IMR-90 (cell line): ENCODE measurements at regions of chr2 and their contacts with region 1.

Region 1: DNA sequence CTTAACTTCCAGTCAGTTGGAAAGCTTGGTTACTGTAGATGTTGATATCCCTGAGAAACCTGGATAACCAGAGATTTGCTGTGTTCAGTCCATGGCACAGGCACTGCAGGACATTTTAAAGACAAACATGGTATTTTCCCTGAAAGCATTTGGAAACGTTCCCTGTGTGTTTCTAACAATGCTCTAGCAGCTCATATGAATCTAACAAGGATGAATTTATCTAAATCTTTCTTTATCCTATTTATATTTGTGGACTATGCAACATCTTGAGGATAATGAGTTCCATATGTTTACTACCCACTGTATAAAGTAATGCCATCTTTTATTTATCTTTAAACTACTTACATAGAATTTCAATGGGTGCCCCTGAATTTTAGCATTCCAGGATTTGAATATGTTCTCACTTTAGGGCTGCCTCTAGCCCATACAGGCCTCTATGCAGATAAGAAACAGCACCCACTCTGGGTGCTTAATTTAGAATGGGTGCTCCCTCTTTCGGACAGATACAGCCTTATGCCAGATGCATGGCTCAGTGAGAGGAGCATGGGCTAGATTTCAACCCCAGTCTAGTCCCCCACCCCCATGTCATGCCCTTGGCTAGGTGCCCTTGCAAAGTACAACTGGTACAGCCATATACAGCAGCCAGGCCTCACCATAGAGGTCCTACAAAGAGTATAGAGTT is 50.6 kb upstream of the NEMP2 start:
- DNase-seq: no peak
- ATAC-seq: peak; percentile 17; the same call in 1 of the 2 replicates
- H3K4me3 ChIP-seq: no peak overlapping the region
- H3K27ac ChIP-seq: no peak overlapping the region
- H3K4me1 ChIP-seq: peaks cover 2% of the 10 kb centered on the region; the same call in 1 of the 2 replicates
- H3K27me3 ChIP-seq: peaks cover 2% of the 10 kb centered on the region; the same call in 1 of the 2 replicates
- CTCF ChIP-seq: no peak
- POLR2A ChIP-seq: no peak
- RAD21 ChIP-seq: no peak

Region 2: GRCh38 chr2:190627448-190628412 is 42.6 kb after region 1 on chr2:
- CTCF ChIA-PET with region 1: no interaction called
- POLR2A ChIA-PET with region 1: no interaction called
- dilution Hi-C with region 1: no loop called
- in situ Hi-C with region 1: no loop called
- intact Hi-C with region 1: loop called (anchors 5 kb)
- DNase-seq: no peak
- ATAC-seq: peak; percentile 87
- H3K4me3 ChIP-seq: peak overlapping the region; percentile 53
- H3K27ac ChIP-seq: no peak overlapping the region
- H3K4me1 ChIP-seq: no peaks in the 10 kb centered on the region
- H3K27me3 ChIP-seq: no peaks in the 10 kb centered on the region; the same call in 1 of the 2 replicates
- CTCF ChIP-seq: no peak
- POLR2A ChIP-seq: no peak
- RAD21 ChIP-seq: no peak